Esophagus muscularis mucosa (tissue), 4 donors: ENCODE measurements at regions of chr7 and their contacts with region 1.

Region 1: GRCh38 chr7:101363734-101364374 is 1.2 kb downstream of the COL26A1 start:
- DNase-seq: no peak
- H3K4me3 ChIP-seq: peak overlapping the region; percentile 53 to 66 (median 56)
- H3K27ac ChIP-seq: no peak overlapping the region
- H3K4me1 ChIP-seq: peaks cover 16 to 21% (median 21%) of the 10 kb centered on the region in 4 donors
- H3K27me3 ChIP-seq: peaks cover 0 to 72% (median 5%) of the 10 kb centered on the region in 4 donors
- CTCF ChIP-seq: peak; percentile 68 to 90 (median 87)
- EP300 ChIP-seq: no peak
- POLR2A ChIP-seq: no peak

Region 2: GRCh38 chr7:101538596-101539459 is 175.0 kb after region 1 on chr7:
- intact Hi-C with region 1: loop called (anchors 10 kb)
- DNase-seq: no peak
- H3K4me3 ChIP-seq: no peak overlapping the region
- H3K27ac ChIP-seq: peak overlapping the region in 1 of 4 donors; percentile 20
- H3K4me1 ChIP-seq: peaks cover 0 to 8% (median 7%) of the 10 kb centered on the region in 4 donors
- H3K27me3 ChIP-seq: peaks cover 0 to 29% (median 0%) of the 10 kb centered on the region in 4 donors
- CTCF ChIP-seq: peak; percentile 60 to 83 (median 70)
- EP300 ChIP-seq: no peak
- POLR2A ChIP-seq: no peak